ENCODE measurements at regions of chr10 and their contacts with region 1.

Region 1: GRCh38 chr10:63866075-63866746 is 345.0 kb downstream of the REEP3 start:
- DNase-seq: no peak
- H3K4me3 ChIP-seq: no peak overlapping the region
- H3K27me3 ChIP-seq: 0 out of 2 replicates have a peak, but pooled peaks cover 1% of the 10 kb centered on the region
- CTCF ChIP-seq: peak; percentile 89

Region 2: DNA sequence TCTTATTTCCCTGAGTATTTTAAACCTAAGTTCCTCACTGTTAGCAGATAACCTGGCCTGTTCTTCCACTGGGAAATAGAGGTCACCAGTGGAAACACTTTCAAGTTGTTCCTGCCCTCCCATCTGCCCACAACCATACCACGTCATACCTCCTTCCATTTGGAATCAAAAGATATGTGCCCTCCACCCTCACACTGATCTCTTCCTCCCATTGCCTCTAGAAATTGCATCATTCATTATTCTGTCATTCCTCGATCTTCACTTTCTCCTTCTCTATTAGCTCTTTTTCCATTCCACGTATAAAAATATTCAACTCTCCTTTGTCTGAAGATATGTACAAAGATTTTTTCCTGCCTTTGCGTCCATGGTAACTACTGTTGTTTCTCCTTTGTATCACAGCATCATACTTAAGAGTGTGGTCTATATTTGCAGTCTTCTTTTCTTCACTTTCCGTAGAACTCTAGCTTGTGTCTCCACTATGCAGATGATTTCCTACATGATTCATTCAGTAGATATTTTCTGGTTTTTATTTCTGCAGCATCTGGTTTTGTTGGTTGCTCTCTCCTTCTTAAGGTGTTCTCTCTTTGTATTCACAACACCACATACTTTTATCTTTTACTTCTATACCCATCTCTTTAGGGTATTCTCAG is 32.7 kb before region 1 on chr10:
- CTCF ChIA-PET with region 1: interaction called, 11 read pairs
- POLR2A ChIA-PET with region 1: no interaction called
- DNase-seq: no peak
- H3K4me3 ChIP-seq: no peak overlapping the region
- H3K27me3 ChIP-seq: no peaks in the 10 kb centered on the region
- CTCF ChIP-seq: no peak

Region 3: GRCh38 chr10:63878428-63878827 is 12.2 kb after region 1 on chr10:
- CTCF ChIA-PET with region 1: interaction called, 10 read pairs
- POLR2A ChIA-PET with region 1: no interaction called
- DNase-seq: no peak
- H3K4me3 ChIP-seq: no peak overlapping the region
- H3K27me3 ChIP-seq: no peaks in the 10 kb centered on the region
- CTCF ChIP-seq: no peak

Region 4: GRCh38 chr10:63976538-63976937 is 110.3 kb after region 1 on chr10:
- CTCF ChIA-PET with region 1: interaction called, 12 read pairs
- POLR2A ChIA-PET with region 1: no interaction called
- DNase-seq: no peak
- H3K4me3 ChIP-seq: no peak overlapping the region
- H3K27me3 ChIP-seq: no peaks in the 10 kb centered on the region
- CTCF ChIP-seq: peak; percentile 47

Region 5: GRCh38 chr10:64011912-64012714 is 145.9 kb after region 1 on chr10:
- CTCF ChIA-PET with region 1: no interaction called
- POLR2A ChIA-PET with region 1: no interaction called
- DNase-seq: no peak
- H3K4me3 ChIP-seq: no peak overlapping the region
- H3K27me3 ChIP-seq: no peaks in the 10 kb centered on the region
- CTCF ChIP-seq: no peak